ENCODE measurements at regions of chr1 and their contacts with region 1.

Region 1: DNA sequence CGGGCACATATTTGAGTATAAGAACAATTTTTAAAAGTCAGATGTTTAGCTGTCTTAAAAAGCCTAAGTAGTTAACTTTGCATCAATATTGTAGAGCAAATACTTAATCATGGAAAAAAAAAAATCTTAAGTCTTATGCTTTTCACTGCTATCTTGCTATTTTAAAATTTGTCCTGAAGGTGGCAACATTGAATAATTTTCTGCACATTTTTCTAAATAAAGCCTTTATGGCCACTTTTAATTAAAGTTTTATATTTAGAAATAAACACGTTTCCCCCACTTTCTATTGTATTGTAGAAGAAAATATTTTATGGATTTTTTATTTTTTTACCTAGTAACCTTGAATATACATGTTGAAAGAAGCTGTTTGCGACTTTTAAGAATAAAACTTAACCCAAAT is 198.8 kb downstream of the AMY1C start:
- DNase-seq: peak; percentile 30
- H3K4me3 Mint-ChIP-seq: no peak overlapping the region
- H3K27ac Mint-ChIP-seq: no peak overlapping the region
- H3K4me1 Mint-ChIP-seq: no peaks in the 10 kb centered on the region
- H3K27me3 Mint-ChIP-seq: no peaks in the 10 kb centered on the region
- CTCF ChIP-seq: peak; percentile 44

Region 2: GRCh38 chr1:104132382-104132973 is 184.0 kb after region 1 on chr1:
- CTCF ChIA-PET with region 1: interaction called, 45 read pairs
- POLR2A ChIA-PET with region 1: no interaction called
- intact Hi-C with region 1: loop called (anchors 1 kb)
- DNase-seq: peak; percentile 63
- H3K4me3 Mint-ChIP-seq: no peak overlapping the region
- H3K27ac Mint-ChIP-seq: peak overlapping the region; percentile 8
- H3K4me1 Mint-ChIP-seq: peaks cover 9% of the 10 kb centered on the region
- H3K27me3 Mint-ChIP-seq: peaks cover 13% of the 10 kb centered on the region
- CTCF ChIP-seq: peak; percentile 53

Region 3: DNA sequence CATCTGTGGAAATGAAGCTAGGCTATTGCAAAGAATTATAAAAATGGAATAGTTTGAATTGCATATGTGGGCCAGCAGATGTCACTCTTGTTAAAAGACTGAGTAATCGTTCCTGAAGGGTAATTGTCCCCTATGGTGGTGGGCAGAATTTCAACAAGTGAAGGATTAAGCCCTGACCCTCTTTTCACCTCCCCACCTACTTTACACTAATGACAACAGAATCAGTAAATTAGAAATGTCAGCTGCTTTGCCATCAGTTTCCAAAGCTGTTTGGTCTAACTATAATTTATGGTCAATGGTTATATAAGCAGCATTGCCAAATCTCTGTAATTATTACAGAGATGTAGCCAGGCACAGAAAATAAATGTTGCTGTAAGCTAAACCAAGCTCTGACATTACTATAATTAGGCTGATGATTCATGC is 699.8 kb after region 1 on chr1:
- CTCF ChIA-PET with region 1: interaction called, 3 read pairs
- POLR2A ChIA-PET with region 1: no interaction called
- intact Hi-C with region 1: loop called (anchors 5 kb)
- DNase-seq: peak; percentile 41
- H3K4me3 Mint-ChIP-seq: no peak overlapping the region
- H3K27ac Mint-ChIP-seq: no peak overlapping the region
- H3K4me1 Mint-ChIP-seq: no peaks in the 10 kb centered on the region
- H3K27me3 Mint-ChIP-seq: no peaks in the 10 kb centered on the region
- CTCF ChIP-seq: peak; percentile 45